Head of caudate nucleus (tissue), 42 donors: ENCODE measurements at regions of chr4 and their contacts with region 1.

Region 1: GRCh38 chr4:80215449-80216052 is 18.2 kb downstream of the PRDM8 start:
- DNase-seq: no peak

Region 2: GRCh38 chr4:78951862-78952472 is 1263.6 kb before region 1 on chr4:
- intact Hi-C with region 1: loop called (anchors 10 kb)
- DNase-seq: peak in 24 of 42 donors; percentile 13 to 77 (median 44)

Region 3: DNA sequence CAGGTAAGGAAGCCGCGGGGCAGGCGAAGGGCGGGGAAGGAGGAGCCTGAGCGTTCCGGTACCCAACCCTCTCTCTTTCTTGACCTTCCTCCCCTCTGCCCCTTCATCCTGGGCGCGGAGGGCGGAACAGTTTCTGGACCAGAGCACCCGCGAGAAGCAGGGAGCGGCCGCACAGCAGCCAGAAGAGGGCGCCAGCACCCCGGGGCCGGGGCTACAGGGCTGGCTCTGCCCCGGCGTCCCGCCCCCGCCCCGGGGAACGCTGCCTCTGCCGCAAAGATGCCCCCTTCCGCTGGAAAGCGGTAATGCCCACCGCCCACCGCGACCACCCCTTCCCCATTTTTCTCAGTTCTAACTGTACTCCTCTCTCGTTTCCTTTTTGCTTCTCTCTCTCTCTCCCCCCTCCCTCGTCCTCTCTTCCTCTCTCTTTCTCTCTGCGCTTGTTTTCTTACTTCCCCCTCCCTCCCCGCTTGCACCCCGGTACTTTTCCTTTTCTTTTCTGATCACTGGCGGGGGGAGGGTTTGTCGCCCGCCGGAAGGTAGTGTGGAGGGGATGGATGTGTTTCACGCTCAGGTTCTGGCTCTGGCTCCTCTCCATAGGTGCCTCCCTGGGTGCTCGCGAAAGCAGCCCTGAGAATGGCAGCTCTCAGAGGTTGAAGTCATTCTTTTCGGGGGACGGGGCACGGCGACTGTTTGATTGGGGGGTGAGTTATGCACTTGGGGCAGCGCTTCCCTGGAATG is 31.3 kb before region 1 on chr4:
- intact Hi-C with region 1: loop called (anchors 2 kb)
- DNase-seq: peak; percentile 58 to 94 (median 85)